HEK293T (cell line): ENCODE measurements at regions of chr16 and their contacts with region 1.

Region 1: DNA sequence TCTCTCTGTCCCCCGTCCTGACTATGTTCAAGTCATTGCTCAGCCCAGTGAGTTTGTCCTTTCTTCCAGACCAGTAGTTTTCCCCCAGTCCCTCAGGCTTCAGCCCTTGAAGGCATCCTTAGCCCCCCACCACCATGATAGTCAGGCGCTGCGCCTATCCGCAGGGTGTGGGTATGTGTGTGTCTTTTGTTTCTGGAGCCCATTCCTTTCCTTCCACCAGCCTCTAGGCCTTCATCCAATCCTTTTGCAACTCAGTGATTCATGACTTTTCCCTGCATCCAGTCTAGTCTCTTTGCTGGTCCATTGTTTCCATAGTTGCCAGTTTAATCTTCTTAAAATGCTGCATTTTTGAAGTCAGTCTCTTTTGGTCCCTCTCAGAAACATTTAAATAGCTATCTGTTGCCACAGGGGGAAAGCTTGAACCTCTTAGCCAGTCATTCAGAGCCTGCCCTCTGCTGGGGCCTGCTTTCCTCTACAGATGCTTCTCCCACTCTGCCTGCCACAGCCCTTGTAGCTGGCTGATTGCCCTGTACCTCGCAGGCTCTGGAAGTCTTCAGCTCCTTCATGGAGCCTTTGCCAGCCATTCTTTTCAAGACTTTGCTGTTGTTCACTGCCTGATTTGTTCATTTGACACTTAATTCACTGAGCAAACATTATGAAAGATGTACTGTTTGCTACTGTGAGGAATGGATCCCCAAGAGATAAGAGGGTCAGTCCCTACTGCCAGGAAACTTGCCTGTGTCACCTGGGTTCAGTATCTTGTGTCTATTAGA is 55.9 kb upstream of the ADCY7 start:
- DNase-seq: peak; percentile 64

Region 2: DNA sequence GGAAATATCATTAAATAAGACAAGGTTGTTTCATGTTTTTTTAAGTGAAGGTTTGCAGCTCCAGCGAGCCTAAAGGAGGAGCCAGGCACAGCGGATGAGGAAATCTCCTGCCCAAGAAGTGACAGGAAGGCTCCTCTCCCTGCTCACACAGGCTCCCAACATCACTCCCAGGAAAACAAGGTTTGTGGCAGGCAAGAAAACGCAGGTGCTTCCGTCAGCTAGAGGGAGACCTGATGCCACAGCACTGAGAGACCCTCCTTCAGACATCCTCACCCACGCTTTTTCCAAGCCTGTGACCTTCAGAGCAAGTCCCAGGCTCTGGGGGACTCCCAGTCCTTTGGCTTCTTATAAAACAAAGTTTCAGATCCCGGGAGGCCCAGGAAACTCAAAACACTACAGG is 444.2 kb before region 1 on chr16:
- CTCF ChIA-PET with region 1: no interaction called
- POLR2A ChIA-PET with region 1: no interaction called
- DNase-seq: no peak

Region 3: GRCh38 chr16:50065624-50066481 is 144.6 kb before region 1 on chr16 and contains the start of gene HEATR3:
- CTCF ChIA-PET with region 1: interaction called, 27 read pairs
- POLR2A ChIA-PET with region 1: interaction called, 12 read pairs
- DNase-seq: peak; percentile 95

Region 4: DNA sequence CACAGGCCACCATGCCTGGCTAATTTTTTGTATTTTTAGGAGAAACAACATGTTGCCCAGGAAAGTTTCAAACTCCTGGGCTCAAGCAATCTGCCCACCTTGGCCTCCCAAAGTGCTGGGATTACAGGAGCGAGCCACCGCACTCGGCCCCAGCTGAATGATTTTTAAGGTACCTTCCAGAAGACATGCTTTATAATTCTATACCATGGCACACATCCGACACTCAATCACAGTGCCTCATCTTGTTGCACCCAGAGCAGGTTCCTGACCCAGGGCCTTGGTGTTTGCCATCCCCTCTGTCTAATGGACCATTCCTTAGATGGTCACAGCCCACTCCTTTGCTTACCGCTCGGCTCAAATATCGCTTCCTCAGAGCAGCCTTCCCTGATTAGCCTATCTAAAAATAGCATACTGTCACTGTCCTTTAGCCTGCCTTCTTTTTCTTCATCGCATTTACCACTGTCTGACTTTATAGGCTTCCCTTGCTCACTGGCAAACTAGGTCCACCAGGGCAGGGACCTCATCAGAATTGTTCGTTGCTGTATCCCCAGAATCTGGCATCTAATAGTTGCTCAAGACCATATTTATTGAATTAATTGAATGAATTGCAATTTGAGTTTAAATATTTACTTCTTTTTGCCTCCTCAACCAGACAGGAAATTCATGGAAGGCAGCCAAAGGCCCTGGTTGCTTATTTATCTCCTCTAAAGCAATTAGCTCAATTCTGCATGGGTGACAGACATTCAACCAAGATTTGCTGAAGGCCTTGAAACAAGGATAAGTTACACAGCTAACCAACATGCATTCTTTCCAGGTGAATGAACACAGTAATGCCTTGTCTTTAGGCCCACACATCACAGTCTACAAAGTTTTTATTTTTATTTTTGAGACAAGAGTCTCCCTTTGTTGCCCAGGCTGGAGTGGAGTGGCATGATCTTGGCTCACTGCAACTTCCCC is 63.7 kb before region 1 on chr16:
- CTCF ChIA-PET with region 1: interaction called, 10 read pairs
- POLR2A ChIA-PET with region 1: no interaction called
- DNase-seq: no peak

Region 5: GRCh38 chr16:50166511-50167500 is 43.6 kb before region 1 on chr16:
- CTCF ChIA-PET with region 1: interaction called, 13 read pairs
- POLR2A ChIA-PET with region 1: no interaction called
- DNase-seq: no peak

Region 6: DNA sequence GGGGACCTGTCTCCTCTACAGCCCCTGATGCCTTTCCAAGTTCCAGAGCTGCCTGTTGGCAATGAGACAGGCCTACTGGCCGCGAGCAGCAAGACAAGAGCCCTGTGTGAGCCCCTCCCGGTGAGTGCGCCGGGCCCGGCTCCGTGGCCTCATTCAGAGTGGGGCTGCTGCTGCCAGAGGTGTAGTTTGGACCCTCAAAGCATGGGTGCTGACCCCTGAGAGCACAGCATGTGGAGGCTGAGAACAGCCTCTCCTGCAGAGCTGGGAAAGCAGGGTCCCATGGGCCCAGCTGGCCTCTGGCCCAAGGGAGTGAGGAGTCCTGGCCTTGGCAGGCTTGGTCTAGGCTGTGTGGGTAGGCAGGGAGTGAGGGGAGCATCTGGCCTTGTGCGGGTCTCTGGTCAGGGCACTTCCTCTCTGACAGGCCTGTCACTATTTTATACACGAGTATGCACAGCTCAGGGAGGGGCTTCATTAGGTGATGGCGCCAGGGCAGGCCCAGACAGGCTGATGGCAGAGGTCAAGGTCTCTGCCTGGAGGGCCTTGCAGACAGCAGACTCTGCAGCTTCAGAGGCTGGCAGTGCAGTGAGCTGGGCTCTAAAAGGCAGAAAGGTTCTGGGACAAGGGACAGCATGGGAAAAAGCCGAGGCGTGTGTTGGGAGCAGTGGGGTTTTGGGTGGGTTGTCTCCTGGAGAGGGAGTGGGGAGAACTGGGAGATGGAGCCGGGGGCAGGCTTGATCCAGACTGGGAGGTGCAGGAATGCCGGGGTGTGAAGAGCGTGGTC is 99.3 kb after region 1 on chr16:
- CTCF ChIA-PET with region 1: no interaction called
- POLR2A ChIA-PET with region 1: no interaction called
- DNase-seq: no peak